PC-9 (cell line): ENCODE measurements at regions of chr7 and their contacts with region 1.

Region 1: GRCh38 chr7:36642010-36642409 is 82.3 kb downstream of the AOAH start:
- DNase-seq: no peak
- H3K4me3 ChIP-seq: no peak overlapping the region
- H3K27ac ChIP-seq: no peak overlapping the region
- H3K4me1 ChIP-seq: no peaks in the 10 kb centered on the region
- H3K27me3 ChIP-seq: peaks cover 99% of the 10 kb centered on the region
- CTCF ChIP-seq: no peak

Region 2: GRCh38 chr7:36625247-36625646 is 16.8 kb before region 1 on chr7:
- CTCF ChIA-PET with region 1: interaction called, 20 read pairs
- POLR2A ChIA-PET with region 1: interaction called, 3 read pairs
- intact Hi-C with region 1: no loop called
- DNase-seq: no peak
- H3K4me3 ChIP-seq: no peak overlapping the region
- H3K27ac ChIP-seq: no peak overlapping the region
- H3K4me1 ChIP-seq: no peaks in the 10 kb centered on the region
- H3K27me3 ChIP-seq: peaks cover 100% of the 10 kb centered on the region
- CTCF ChIP-seq: no peak

Region 3: DNA sequence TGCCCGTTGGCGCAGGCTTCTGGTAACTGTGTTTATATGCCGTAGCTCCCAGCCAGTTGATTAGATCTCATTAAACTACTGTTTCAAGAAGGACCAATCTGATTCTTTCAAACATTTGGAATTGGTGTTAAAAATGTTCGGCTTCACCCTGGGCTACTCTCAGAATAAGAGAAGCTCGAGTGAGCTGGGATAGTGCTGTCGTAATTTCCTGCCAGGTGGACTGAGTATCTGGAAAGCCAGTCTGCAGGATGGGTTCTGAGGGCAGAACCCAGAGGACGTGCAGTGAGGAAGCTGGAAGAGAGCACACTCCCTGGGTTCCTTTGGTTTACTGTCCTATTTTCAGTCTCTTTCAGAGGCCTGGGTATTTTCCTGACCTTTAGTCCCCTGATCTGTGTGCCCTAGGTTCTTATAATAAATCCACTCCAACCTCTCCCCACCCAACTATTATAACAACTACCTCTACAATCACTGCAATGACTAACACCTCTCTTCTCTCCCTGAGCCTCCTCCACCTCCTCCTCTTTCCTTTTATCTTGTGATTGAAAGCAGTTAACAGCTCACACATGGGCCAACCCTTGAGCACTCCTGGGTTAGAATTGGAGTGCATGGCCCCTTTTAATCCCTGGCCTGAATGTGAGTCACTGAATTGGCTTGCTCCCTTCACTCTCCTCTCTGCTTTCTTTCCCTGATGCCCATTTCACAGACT is 19.3 kb after region 1 on chr7:
- CTCF ChIA-PET with region 1: no interaction called
- POLR2A ChIA-PET with region 1: no interaction called
- intact Hi-C with region 1: no loop called
- DNase-seq: no peak
- H3K4me3 ChIP-seq: no peak overlapping the region
- H3K27ac ChIP-seq: no peak overlapping the region
- H3K4me1 ChIP-seq: no peaks in the 10 kb centered on the region
- H3K27me3 ChIP-seq: peaks cover 50% of the 10 kb centered on the region
- CTCF ChIP-seq: no peak

Region 4: GRCh38 chr7:36810489-36810888 is 168.5 kb after region 1 on chr7:
- CTCF ChIA-PET with region 1: no interaction called
- POLR2A ChIA-PET with region 1: no interaction called
- intact Hi-C with region 1: no loop called
- DNase-seq: no peak
- H3K4me3 ChIP-seq: no peak overlapping the region
- H3K27ac ChIP-seq: no peak overlapping the region
- H3K4me1 ChIP-seq: no peaks in the 10 kb centered on the region
- H3K27me3 ChIP-seq: peaks cover 19% of the 10 kb centered on the region; the same call in 1 of the 2 replicates
- CTCF ChIP-seq: no peak